ENCODE measurements at regions of chr19 and their contacts with region 1.

Region 1: DNA sequence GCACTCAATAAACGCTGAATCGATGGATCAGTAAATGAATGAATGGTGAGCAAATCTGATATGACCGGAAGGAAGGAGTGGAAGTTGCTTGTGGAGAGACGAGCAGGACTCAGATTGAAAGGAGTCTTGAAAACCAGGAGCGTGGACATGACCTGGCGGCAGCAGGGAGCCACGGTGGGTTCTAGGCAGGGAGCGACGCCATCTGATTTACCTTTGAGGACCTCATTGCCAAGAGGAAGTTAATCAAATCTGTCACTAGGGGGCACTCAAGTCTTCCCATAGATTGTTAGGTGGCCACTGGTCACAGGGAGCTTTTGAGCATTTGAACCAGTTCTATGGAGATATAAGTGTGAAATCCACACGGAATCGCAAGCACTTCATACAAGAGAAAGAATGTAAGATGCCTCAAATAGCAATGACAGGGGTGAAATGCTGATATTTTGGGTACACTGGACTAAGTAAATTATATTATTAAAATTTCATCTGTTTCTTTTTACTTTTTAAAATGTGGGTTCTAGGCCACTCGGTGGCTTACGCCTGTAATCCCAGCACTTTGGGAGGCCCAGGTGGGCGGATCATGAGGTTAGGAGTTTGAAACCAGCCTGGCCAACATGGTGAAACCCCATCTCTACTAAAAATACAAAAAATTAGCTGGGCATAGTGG is 9.2 kb upstream of the FBN3 start:
- DNase-seq: peak in 8 of 9 donors; percentile 34 to 70 (median 60)
- ATAC-seq: peak; percentile 69
- H3K4me3 ChIP-seq: no peak overlapping the region
- H3K4me3 Mint-ChIP-seq: no peak overlapping the region
- H3K27ac ChIP-seq: no peak overlapping the region
- H3K27ac Mint-ChIP-seq: no peak overlapping the region
- H3K4me1 ChIP-seq: no peaks in the 10 kb centered on the region
- H3K4me1 Mint-ChIP-seq: peaks cover 0 to 12% (median 3%) of the 10 kb centered on the region in 7 donors
- H3K27me3 ChIP-seq: no peaks in the 10 kb centered on the region
- H3K27me3 Mint-ChIP-seq: peaks cover 4 to 27% (median 23%) of the 10 kb centered on the region in 5 donors

Region 2: DNA sequence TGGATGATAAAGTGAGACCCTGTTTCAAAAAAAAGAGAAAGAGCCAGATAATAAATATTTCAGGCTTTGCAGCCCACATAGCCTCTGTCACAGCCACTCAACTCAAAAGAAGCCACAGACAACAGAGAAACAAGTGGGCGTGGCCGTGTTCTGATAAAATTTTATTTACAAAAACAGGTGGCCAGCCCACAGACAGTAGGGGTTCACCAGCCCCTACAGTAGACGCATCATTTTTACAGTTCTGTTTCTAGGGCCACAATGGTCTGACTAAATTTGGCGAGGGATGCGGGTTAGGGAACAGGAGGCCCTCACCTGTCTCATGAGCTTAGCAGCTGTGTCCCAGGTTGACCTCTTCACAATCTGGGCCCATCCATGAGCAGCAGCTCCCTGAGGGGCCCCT is 750.3 kb before region 1 on chr19:
- CTCF ChIA-PET with region 1: no interaction called
- POLR2A ChIA-PET with region 1: no interaction called
- intact Hi-C with region 1: no loop called
- DNase-seq: no peak
- ATAC-seq: no peak
- H3K4me3 ChIP-seq: no peak overlapping the region
- H3K4me3 Mint-ChIP-seq: peak overlapping the region in 4 of 10 donors; percentile 3 to 21 (median 19)
- H3K27ac ChIP-seq: no peak overlapping the region
- H3K27ac Mint-ChIP-seq: peak overlapping the region in 7 of 9 donors; percentile 19 to 76 (median 66)
- H3K4me1 ChIP-seq: no peaks in the 10 kb centered on the region
- H3K4me1 Mint-ChIP-seq: peaks cover 16 to 60% (median 43%) of the 10 kb centered on the region in 7 donors
- H3K27me3 ChIP-seq: no peaks in the 10 kb centered on the region
- H3K27me3 Mint-ChIP-seq: no peaks in the 10 kb centered on the region

Region 3: DNA sequence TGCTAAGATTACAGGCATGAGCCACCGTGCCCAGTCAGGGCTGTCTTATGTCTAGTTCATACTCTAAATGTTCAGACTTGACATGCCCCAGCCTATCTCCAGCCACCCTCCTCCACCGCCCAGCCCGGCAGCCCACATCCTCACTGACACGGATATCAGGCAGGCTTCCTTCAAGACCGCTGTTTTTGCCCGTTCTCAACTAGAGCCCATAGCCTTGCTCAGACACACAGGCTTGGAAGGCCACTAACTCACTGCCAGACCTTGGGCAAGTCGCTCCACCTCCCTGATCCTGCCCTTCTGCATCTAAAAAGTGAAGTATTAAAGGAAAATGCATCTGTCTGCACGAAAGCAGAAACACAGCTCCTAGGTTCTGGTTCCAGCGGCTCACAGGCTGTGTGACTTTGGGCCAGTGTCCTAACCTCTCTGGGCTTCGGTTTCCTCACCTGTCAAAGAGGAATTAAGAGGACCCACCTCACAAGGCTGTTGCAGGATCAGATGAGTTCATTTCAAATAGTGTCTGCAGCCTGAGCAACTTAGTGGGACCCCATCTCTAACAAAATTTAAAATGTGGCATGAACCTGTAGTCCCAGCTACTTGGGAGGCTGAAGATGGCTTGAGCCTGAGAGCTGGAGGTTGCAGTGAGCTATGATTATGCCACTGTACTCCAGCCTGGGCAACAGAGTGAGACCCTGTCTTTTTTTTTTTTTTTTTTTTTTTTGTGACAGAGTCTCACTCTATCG is 36.2 kb after region 1 on chr19:
- CTCF ChIA-PET with region 1: no interaction called
- POLR2A ChIA-PET with region 1: no interaction called
- intact Hi-C with region 1: loop called in 1 of 2 experiments (anchors 2 kb)
- DNase-seq: peak in 5 of 9 donors; percentile 20 to 40 (median 34)
- ATAC-seq: peak; percentile 60
- H3K4me3 ChIP-seq: peak overlapping the region; percentile 19
- H3K4me3 Mint-ChIP-seq: peak overlapping the region; percentile 63 to 93 (median 82)
- H3K27ac ChIP-seq: peak overlapping the region; percentile 62
- H3K27ac Mint-ChIP-seq: peak overlapping the region; percentile 87 to 98 (median 93)
- H3K4me1 ChIP-seq: peaks cover 15 to 20% of the 10 kb centered on the region in 2 donors
- H3K4me1 Mint-ChIP-seq: peaks cover 42 to 53% (median 49%) of the 10 kb centered on the region in 7 donors
- H3K27me3 ChIP-seq: no peaks in the 10 kb centered on the region
- H3K27me3 Mint-ChIP-seq: no peaks in the 10 kb centered on the region

Region 4: DNA sequence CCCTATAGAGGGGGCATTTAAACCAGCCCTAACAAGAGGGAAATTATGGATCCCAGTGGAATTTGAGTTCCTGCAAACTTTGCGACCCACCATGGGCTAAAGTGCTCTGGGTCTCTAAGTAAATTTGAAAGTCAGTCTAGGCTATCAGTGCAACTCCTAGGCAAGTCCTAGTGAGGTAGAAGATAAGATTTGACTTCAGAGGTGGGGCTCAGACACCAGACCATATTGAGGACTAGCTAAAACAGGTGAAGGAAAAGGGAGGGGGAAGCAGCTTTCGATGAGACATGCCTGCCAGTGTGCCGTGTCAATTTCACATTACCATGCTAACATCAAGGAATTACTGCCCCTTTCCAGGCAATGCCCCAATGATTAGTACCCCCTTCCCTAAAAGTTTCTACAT is 111.2 kb after region 1 on chr19:
- CTCF ChIA-PET with region 1: interaction called, 4 read pairs
- POLR2A ChIA-PET with region 1: no interaction called
- intact Hi-C with region 1: loop called in 1 of 2 experiments (anchors 5 kb)
- DNase-seq: no peak
- ATAC-seq: no peak
- H3K4me3 ChIP-seq: peak overlapping the region; percentile 98
- H3K4me3 Mint-ChIP-seq: peak overlapping the region; percentile 85 to 97 (median 93)
- H3K27ac ChIP-seq: peak overlapping the region; percentile 88
- H3K27ac Mint-ChIP-seq: peak overlapping the region; percentile 66 to 95 (median 93)
- H3K4me1 ChIP-seq: peaks cover 0 to 6% of the 10 kb centered on the region in 2 donors
- H3K4me1 Mint-ChIP-seq: peaks cover 7 to 25% (median 13%) of the 10 kb centered on the region in 7 donors
- H3K27me3 ChIP-seq: no peaks in the 10 kb centered on the region
- H3K27me3 Mint-ChIP-seq: no peaks in the 10 kb centered on the region

Region 5: DNA sequence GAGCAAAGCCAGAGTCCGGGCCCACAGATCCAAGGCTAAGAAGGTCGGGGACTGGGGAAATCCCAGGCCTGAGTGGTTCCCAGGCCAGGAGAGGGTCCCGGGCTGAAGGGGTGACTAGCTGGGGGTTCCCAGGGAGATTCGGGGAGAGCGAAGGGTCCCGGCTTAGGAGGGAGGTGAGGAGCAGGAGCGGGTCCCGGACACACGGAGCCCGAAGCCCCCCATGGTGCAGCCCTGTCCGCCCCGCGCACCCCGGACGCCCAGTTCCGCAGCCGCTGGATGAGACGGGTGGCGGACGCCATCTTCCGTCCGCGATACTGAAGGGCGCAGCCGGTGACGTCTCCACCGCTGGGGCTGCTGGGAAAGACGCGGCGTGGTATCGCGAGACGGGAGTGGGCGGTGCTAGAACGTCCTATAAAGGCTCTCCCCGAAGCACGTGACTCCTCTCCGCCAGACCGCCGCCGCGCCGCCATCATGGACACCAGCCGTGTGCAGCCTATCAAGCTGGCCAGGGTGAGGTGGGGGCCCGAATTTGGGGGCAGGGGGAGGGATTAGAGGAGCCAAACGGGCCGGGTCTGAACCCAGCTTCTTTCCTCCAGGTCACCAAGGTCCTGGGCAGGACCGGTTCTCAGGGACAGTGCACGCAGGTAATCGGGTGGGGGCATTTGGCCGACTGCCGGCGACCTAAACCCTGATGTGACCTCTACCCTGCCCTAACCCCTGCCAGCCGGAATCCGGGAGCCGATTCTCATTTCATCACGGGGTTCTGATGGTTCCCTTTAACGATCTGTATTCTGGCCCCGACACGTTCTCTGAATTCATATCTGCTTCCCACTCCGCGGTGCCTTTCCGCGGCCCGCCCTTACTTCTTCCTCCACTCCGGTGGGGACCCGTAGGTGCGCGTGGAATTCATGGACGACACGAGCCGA is 162.8 kb after region 1 on chr19 and contains the starts of genes NDUFA7 and RPS28:
- CTCF ChIA-PET with region 1: no interaction called
- POLR2A ChIA-PET with region 1: no interaction called
- intact Hi-C with region 1: loop called in 1 of 2 experiments (anchors 1 kb)
- DNase-seq: peak; percentile 94 to 97 (median 96)
- ATAC-seq: peak; percentile 98
- H3K4me3 ChIP-seq: peak within 1 kb of the TSS; percentile 98
- H3K4me3 Mint-ChIP-seq: peak within 1 kb of the TSS; percentile 90 to 99 (median 98)
- H3K27ac ChIP-seq: peak within 1 kb of the TSS; percentile 96
- H3K27ac Mint-ChIP-seq: peak within 1 kb of the TSS; percentile 94 to 99 (median 98)
- H3K4me1 ChIP-seq: peaks cover 25% of the 10 kb centered on the region in 2 donors
- H3K4me1 Mint-ChIP-seq: peaks cover 16 to 44% (median 29%) of the 10 kb centered on the region in 7 donors
- H3K27me3 ChIP-seq: no peaks in the 10 kb centered on the region
- H3K27me3 Mint-ChIP-seq: no peaks in the 10 kb centered on the region
- total RNA-seq, gene NDUFA7: 16.8 to 50.3 (median 30.0) TPM
- total RNA-seq, gene RPS28: 2,319 to 4,111 (median 3,327) TPM